Activated CD8-positive, alpha-beta T cell treated with anti-CD3 and anti-CD28 coated beads for 36 hours (primary cell): ENCODE measurements at regions of chr2 and their contacts with region 1.

Region 1: GRCh38 chr2:64914735-64915509 is 74.3 kb upstream of the SLC1A4 start:
- DNase-seq: no peak
- ATAC-seq: no peak
- H3K4me3 Mint-ChIP-seq: no peak overlapping the region
- H3K27ac Mint-ChIP-seq: no peak overlapping the region
- H3K4me1 Mint-ChIP-seq: peaks cover 28% of the 10 kb centered on the region
- H3K27me3 Mint-ChIP-seq: no peaks in the 10 kb centered on the region
- CTCF ChIP-seq: no peak

Region 2: DNA sequence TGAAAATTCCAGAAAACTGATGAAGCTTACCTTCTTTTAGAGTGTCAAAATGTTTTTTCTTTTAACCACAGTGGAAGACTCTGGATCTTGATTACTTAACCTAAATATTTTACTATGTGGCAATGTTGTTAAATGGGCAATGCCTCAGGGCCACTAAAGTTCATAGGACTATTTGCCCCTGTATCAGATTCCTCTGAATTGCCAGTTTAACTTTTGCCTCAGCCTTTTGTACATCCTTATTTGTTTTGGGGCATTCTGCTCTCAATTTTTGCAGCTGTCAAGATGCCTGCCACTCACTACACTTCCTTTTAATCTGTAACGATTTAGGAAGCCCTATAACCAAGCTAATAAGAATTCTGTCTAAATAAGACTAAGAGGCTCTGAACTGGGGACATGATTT is 229.5 kb before region 1 on chr2:
- CTCF ChIA-PET with region 1: no interaction called
- POLR2A ChIA-PET with region 1: no interaction called
- intact Hi-C with region 1: no loop called
- DNase-seq: no peak
- ATAC-seq: no peak
- H3K4me3 Mint-ChIP-seq: no peak overlapping the region
- H3K27ac Mint-ChIP-seq: no peak overlapping the region
- H3K4me1 Mint-ChIP-seq: peaks cover 32% of the 10 kb centered on the region
- H3K27me3 Mint-ChIP-seq: no peaks in the 10 kb centered on the region
- CTCF ChIP-seq: no peak

Region 3: GRCh38 chr2:64904413-64905329 is 10.3 kb before region 1 on chr2:
- CTCF ChIA-PET with region 1: interaction called, 10 read pairs
- POLR2A ChIA-PET with region 1: interaction called, 3 read pairs
- intact Hi-C with region 1: no loop called
- DNase-seq: no peak
- ATAC-seq: no peak
- H3K4me3 Mint-ChIP-seq: no peak overlapping the region
- H3K27ac Mint-ChIP-seq: no peak overlapping the region
- H3K4me1 Mint-ChIP-seq: no peaks in the 10 kb centered on the region
- H3K27me3 Mint-ChIP-seq: peaks cover 7% of the 10 kb centered on the region
- CTCF ChIP-seq: no peak

Region 4: DNA sequence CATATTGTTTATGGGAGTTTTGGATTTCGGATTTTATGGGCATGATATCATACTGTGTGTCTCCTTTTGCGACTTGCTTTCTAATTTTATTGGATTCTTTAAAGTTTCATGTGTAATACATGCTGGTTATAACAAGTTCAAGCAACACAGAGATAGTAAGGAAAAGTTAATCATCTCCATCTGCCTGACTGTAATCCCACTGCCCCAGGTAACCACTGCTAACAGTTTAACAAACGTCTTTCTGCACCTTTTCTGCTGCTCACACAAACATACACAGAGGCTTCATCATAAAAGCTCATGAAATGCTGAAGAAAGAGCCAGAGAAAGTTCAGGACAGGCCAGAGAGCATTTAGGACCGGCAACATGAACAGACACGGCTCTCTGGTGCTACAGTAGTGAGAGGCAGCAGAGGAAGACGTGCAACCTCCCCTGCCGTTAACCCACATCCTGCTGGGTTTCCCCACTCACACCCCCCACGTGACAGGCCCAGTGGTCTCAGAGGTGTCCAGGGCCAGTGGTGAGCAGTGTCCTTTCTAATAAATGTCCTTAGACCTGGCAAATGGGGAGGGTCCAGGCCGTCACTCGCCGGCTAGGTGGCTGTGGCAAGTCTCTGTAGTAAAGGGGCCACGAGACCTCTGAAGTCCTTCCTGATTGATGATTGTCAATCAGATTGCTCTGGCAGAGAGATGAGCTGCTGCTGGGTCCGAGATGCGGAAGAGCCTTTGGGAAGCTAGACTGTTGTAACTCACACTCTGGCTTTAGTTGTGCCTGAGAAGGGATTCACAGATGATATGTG is 31.2 kb after region 1 on chr2:
- CTCF ChIA-PET with region 1: interaction called, 15 read pairs
- POLR2A ChIA-PET with region 1: no interaction called
- intact Hi-C with region 1: no loop called
- DNase-seq: peak; percentile 86
- ATAC-seq: peak; percentile 97
- H3K4me3 Mint-ChIP-seq: peak overlapping the region; percentile 70
- H3K27ac Mint-ChIP-seq: peak overlapping the region; percentile 92
- H3K4me1 Mint-ChIP-seq: peaks cover 29% of the 10 kb centered on the region
- H3K27me3 Mint-ChIP-seq: no peaks in the 10 kb centered on the region
- CTCF ChIP-seq: no peak

Region 5: DNA sequence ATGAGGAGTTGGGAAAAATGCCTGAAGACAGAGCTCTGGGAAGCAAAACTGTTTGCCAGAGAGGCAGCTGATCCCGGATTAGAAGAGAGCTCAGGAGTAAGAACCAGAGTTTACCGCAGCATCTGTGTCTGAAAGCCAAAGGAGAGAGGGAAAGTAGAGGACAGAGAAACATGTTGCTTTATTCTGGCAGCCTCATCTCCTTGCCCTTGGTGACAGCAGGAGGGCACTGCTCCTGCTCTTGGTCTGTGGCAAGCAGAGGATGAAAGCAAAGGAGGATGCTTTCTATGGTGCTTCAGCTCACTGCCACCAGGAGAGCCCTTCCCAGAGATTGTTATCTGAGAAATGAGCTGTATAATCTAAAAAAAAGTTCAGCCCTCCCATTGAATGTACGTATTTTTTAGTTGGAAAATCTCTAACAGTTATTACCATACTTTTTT is 82.0 kb after region 1 on chr2:
- CTCF ChIA-PET with region 1: interaction called, 13 read pairs
- POLR2A ChIA-PET with region 1: no interaction called
- intact Hi-C with region 1: no loop called
- DNase-seq: no peak
- ATAC-seq: no peak
- H3K4me3 Mint-ChIP-seq: no peak overlapping the region
- H3K27ac Mint-ChIP-seq: no peak overlapping the region
- H3K4me1 Mint-ChIP-seq: peaks cover 13% of the 10 kb centered on the region
- H3K27me3 Mint-ChIP-seq: peaks cover 5% of the 10 kb centered on the region
- CTCF ChIP-seq: no peak

Region 6: DNA sequence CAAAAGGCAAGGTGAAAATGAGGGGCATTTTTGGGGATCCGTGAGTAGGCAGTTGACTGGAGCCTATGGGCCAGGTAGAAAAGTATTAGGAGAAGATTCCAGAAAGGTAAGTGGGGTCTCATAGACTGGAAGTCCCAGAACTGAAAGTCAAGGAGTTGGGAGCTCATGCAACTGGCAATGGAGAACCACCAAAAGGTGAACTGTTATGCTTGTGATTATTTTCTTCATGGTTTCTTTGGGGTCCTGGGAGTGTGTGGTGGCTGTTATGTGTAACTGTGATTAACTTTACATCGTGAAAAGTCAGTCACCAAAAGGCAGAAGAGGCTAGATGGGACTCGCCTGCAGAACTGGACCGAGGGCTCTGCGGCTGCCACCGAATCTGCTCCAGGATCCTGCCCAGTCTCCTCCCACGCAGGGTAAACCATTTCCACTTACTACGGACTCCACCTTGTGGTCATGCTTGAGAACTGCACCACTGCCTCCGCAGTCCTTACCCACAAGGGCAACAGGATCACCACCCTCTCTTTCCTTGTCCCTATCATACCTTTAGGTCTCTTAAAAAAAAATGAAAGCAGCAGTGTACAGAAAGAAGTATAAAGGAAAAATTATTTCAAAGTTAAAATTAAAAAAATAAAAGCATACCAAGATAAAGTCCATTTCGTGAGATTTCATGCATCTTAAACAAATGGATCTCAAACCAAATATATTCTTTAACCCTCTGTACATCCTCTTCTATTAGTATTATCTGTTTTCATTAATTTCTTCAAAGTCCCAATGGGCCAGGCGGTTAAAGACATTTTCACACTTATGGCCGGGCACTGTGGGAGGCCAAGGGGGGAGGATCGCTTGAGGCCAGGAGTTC is 125.7 kb after region 1 on chr2:
- CTCF ChIA-PET with region 1: interaction called, 237 read pairs
- POLR2A ChIA-PET with region 1: no interaction called
- intact Hi-C with region 1: loop called (anchors 2 kb)
- DNase-seq: peak; percentile 87
- ATAC-seq: peak; percentile 97
- H3K4me3 Mint-ChIP-seq: no peak overlapping the region
- H3K27ac Mint-ChIP-seq: no peak overlapping the region
- H3K4me1 Mint-ChIP-seq: peaks cover 11% of the 10 kb centered on the region
- H3K27me3 Mint-ChIP-seq: no peaks in the 10 kb centered on the region
- CTCF ChIP-seq: peak; percentile 99

Region 7: GRCh38 chr2:65056215-65057053 is 141.5 kb after region 1 on chr2 and contains the start of gene CEP68:
- CTCF ChIA-PET with region 1: interaction called, 16 read pairs
- POLR2A ChIA-PET with region 1: interaction called, 3 read pairs
- intact Hi-C with region 1: no loop called
- DNase-seq: peak; percentile 98
- ATAC-seq: peak; percentile 94
- H3K4me3 Mint-ChIP-seq: peak within 1 kb of the TSS; percentile 92
- H3K27ac Mint-ChIP-seq: peak within 1 kb of the TSS; percentile 84
- H3K4me1 Mint-ChIP-seq: peaks cover 49% of the 10 kb centered on the region
- H3K27me3 Mint-ChIP-seq: no peaks in the 10 kb centered on the region
- CTCF ChIP-seq: no peak
- total RNA-seq, gene CEP68: 6.0 to 6.3 TPM